HepG2 (cell line): ENCODE measurements at regions of chr7 and their contacts with region 1.

Region 1: GRCh38 chr7:66905689-66906088 is 15.3 kb upstream of the TMEM248 start:
- DNase-seq: no peak
- ATAC-seq: peak; percentile 70
- H3K4me3 ChIP-seq: no peak overlapping the region
- H3K27ac ChIP-seq: no peak overlapping the region
- H3K4me1 ChIP-seq: no peaks in the 10 kb centered on the region
- H3K27me3 ChIP-seq: no peaks in the 10 kb centered on the region
- CTCF ChIP-seq: peak; percentile 38; the same call in 1 of the 2 replicates
- EP300 ChIP-seq: no peak
- POLR2A ChIP-seq: no peak
- RAD21 ChIP-seq: no peak

Region 2: GRCh38 chr7:66837007-66837406 is 68.7 kb before region 1 on chr7:
- CTCF ChIA-PET with region 1: no interaction called
- POLR2A ChIA-PET with region 1: no interaction called
- in situ Hi-C with region 1: no loop called
- intact Hi-C with region 1: loop called (anchors 1 kb)
- DNase-seq: peak; percentile 61
- ATAC-seq: peak; percentile 81
- H3K4me3 ChIP-seq: no peak overlapping the region
- H3K27ac ChIP-seq: no peak overlapping the region
- H3K4me1 ChIP-seq: peaks cover 5% of the 10 kb centered on the region; the same call in 1 of the 2 replicates
- H3K27me3 ChIP-seq: no peaks in the 10 kb centered on the region
- CTCF ChIP-seq: peak; percentile 86
- EP300 ChIP-seq: no peak
- POLR2A ChIP-seq: no peak
- RAD21 ChIP-seq: peak; percentile 43; the same call in 1 of the 2 replicates

Region 3: GRCh38 chr7:66886152-66886551 is 19.5 kb before region 1 on chr7:
- CTCF ChIA-PET with region 1: no interaction called
- POLR2A ChIA-PET with region 1: no interaction called
- in situ Hi-C with region 1: no loop called
- intact Hi-C with region 1: no loop called
- DNase-seq: no peak
- ATAC-seq: no peak
- H3K4me3 ChIP-seq: no peak overlapping the region
- H3K27ac ChIP-seq: no peak overlapping the region
- H3K4me1 ChIP-seq: no peaks in the 10 kb centered on the region
- H3K27me3 ChIP-seq: no peaks in the 10 kb centered on the region
- CTCF ChIP-seq: no peak
- EP300 ChIP-seq: no peak
- POLR2A ChIP-seq: no peak
- RAD21 ChIP-seq: no peak